ENCODE measurements at regions of chr2 and their contacts with region 1.

Region 1: DNA sequence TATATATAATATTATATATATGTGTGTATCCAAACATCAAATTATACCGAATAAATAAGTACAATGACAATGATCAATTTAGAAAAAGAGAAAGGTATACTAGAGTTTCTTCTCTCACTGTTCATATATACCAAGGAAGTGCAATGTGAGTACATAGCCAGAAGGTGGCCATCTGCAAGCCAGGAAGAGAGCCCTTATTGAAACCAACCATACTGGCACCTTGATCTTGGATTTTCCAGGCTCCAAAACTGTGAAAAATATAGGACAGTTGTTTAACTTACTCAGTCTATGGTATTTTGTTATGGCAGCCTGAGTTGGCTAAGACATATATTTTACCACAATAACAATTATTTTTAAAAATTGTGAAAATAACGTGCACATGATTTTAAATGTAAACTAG is 1490.2 kb upstream of the SLC39A10 start:
- DNase-seq: peak; percentile 8
- ATAC-seq: peak; percentile 55
- H3K4me3 Mint-ChIP-seq: no peak overlapping the region
- H3K27ac Mint-ChIP-seq: no peak overlapping the region
- H3K4me1 Mint-ChIP-seq: no peaks in the 10 kb centered on the region
- H3K27me3 Mint-ChIP-seq: no peaks in the 10 kb centered on the region
- CTCF ChIP-seq: peak; percentile 40

Region 2: GRCh38 chr2:194148776-194149175 is 18.0 kb before region 1 on chr2:
- CTCF ChIA-PET with region 1: no interaction called
- POLR2A ChIA-PET with region 1: no interaction called
- intact Hi-C with region 1: no loop called
- DNase-seq: no peak
- ATAC-seq: no peak
- H3K4me3 Mint-ChIP-seq: no peak overlapping the region
- H3K27ac Mint-ChIP-seq: no peak overlapping the region
- H3K4me1 Mint-ChIP-seq: no peaks in the 10 kb centered on the region
- H3K27me3 Mint-ChIP-seq: no peaks in the 10 kb centered on the region
- CTCF ChIP-seq: no peak

Region 3: GRCh38 chr2:195318440-195319111 is 1151.8 kb after region 1 on chr2:
- CTCF ChIA-PET with region 1: no interaction called
- POLR2A ChIA-PET with region 1: no interaction called
- intact Hi-C with region 1: loop called (anchors 5 kb)
- DNase-seq: peak; percentile 63
- ATAC-seq: peak; percentile 34
- H3K4me3 Mint-ChIP-seq: no peak overlapping the region
- H3K27ac Mint-ChIP-seq: no peak overlapping the region
- H3K4me1 Mint-ChIP-seq: peaks cover 2% of the 10 kb centered on the region
- H3K27me3 Mint-ChIP-seq: no peaks in the 10 kb centered on the region
- CTCF ChIP-seq: peak; percentile 79